ENCODE measurements at regions of chr19 and their contacts with region 1.

Region 1: GRCh38 chr19:50368649-50369570 is 3.5 kb upstream of the NAPSA start:
- DNase-seq: peak; percentile 88 to 97
- H3K4me3 ChIP-seq: peak overlapping the region; percentile 46
- CTCF ChIP-seq: peak in 1 of 3 donors; percentile 32
- POLR2A ChIP-seq: no peak

Region 2: DNA sequence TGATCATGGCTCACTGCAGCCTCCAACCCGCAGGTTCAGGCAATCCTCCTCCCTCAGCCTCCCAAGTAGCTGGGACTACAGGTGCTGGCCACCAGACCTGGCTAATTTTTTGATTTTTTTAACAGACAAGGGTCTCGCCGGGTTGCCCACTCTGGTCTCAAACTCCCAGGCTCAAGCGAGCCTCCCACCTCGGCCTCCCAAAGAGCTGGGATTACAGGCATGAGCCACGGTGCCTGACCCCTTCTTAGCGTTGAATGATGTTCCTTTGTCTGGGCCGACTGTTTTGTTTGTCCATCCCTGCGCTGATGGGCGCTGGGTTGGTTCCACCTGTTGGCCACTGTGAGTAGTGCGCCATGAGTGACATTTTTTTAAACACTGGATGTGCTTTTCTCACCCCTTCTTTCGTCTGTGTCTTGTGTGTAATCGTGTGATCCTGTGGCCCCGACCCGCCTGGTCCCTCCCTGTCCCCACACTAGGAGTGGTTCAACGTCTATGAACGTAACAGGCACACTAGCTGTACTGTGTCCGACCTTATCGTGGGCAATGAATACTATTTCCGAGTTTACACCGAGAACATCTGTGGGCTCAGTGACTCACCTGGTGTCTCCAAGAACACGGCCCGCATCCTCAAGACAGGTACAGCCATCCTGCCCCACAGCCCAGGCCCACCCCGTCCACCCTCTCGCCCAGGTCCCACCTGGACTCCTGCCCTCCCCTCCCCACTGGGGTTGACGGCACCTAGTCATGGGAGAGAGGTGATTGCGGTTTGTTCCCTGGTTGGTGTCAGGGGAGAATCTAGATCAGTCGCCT is 92.4 kb after region 1 on chr19:
- intact Hi-C with region 1: loop called (anchors 5 kb)
- DNase-seq: peak; percentile 33 to 90
- H3K4me3 ChIP-seq: no peak overlapping the region
- CTCF ChIP-seq: no peak
- POLR2A ChIP-seq: no peak

Region 3: DNA sequence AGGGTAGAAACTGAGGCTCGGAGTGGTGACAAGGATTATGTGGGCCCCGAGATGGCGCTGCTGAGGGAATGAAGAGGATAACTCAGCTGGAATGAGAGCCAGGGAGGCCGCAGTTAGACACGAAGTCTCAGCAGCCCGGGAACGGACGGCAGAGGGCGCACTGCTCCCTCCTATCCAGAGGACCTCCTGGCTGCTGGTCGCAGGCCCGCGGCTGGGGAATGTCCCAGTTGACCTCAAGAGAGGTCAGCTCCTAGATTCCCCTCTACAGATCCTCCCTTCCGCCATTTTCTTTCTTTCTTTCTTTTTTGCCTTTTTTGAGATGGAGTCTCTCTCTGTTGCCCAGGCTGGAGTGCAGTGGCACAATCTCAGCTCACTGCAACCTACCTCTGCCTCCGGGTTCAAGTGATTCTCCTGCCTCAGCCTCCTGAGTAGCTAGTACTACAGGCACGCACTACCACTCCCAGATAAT is 168.9 kb after region 1 on chr19:
- intact Hi-C with region 1: no loop called
- DNase-seq: peak in 1 of 2 donors; percentile 30
- H3K4me3 ChIP-seq: no peak overlapping the region
- CTCF ChIP-seq: no peak
- POLR2A ChIP-seq: no peak

Region 4: GRCh38 chr19:51203916-51204315 is 835.0 kb after region 1 on chr19:
- intact Hi-C with region 1: no loop called
- DNase-seq: no peak
- H3K4me3 ChIP-seq: no peak overlapping the region
- CTCF ChIP-seq: no peak
- POLR2A ChIP-seq: no peak

Measured in lower leg skin (tissue), 4 donors.